MCF 10A (cell line): ENCODE measurements at regions of chr7 and their contacts with region 1.

Region 1: DNA sequence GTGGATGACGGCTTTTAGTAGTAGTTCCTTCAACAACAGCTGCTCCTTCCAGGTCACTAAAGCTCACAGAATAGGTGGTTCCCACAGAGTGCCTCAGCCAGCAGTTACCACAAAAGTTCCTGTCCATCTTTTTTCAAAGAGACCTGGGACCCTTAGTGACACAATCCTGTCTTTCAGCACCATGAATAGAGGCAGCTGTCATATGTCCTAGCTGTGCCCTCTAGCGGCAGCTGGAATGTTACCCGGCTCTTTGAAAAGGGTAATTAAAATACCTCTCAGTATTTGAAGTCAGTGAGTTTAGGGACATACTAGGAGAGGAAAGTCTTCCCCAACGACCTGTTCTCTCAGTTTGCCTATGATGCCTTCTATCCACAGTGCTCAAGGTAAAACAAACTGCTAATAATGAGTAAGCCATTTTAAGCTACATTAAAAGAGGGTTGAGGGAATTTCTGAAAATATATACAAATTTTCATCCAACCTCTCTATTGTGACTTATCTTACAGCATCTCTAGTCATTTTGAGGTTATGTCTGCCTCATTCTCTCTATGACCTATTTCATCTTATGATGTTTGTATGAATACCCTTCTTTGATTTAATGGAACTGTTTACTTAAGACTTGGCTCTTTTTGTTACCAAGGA is 290.8 kb downstream of the NXPH1 start:
- DNase-seq: peak; percentile 62
- H3K4me3 Mint-ChIP-seq: no peak overlapping the region
- H3K27ac Mint-ChIP-seq: no peak overlapping the region
- H3K4me1 Mint-ChIP-seq: no peaks in the 10 kb centered on the region
- H3K27me3 Mint-ChIP-seq: no peaks in the 10 kb centered on the region
- CTCF ChIP-seq: peak; percentile 68

Region 2: DNA sequence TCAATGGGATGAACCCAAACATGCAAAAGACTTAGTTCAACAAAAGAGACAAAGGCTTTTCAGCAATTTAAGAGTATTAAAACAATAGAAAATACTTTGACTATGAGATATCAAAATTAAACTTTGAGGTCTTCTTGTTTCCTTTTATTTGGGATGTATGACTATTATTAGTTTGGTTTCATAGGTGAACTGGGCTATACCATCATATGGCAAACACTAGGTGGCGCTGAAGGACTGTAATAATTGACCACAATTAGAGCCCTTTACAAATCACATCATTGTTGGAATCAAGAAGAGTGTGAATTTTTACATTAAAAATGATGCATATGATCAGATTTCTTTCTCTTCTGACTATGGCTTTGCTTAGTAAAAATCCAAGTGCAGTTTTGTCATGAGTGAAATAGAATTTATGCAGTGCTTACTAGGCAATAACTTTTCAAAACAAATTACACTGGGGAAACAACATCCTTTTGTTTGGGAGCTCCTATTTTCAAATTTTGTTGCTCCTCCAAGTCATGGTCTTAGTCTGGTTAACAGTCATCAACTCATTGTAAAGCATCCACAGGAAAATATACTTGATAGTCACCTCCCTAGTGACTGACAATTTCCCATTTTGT is 305.5 kb before region 1 on chr7:
- CTCF ChIA-PET with region 1: interaction called, 20 read pairs
- POLR2A ChIA-PET with region 1: no interaction called
- intact Hi-C with region 1: loop called (anchors 1 kb)
- DNase-seq: peak; percentile 75
- H3K4me3 Mint-ChIP-seq: no peak overlapping the region
- H3K27ac Mint-ChIP-seq: no peak overlapping the region
- H3K4me1 Mint-ChIP-seq: no peaks in the 10 kb centered on the region
- H3K27me3 Mint-ChIP-seq: peaks cover 36% of the 10 kb centered on the region
- CTCF ChIP-seq: peak; percentile 69

Region 3: DNA sequence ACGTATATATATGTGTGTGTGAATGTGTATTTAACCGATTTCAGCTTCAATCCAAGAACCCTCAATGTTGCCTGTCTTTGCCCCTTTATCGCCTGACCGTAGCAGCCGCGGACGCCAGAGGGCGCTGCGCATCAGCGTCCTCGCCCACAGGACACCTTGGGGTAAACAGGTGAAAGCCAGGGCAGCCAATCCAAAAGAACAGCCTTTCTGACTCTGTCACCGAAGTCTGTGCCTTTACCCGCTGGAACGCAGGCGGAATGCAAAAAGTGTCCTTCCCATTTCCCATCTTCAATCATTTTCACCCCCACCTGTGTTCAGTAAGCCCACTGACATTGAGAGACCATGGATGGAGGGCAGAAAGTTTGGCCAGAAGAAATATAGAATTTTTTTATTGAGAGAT is 287.2 kb before region 1 on chr7:
- CTCF ChIA-PET with region 1: interaction called, 5 read pairs
- POLR2A ChIA-PET with region 1: no interaction called
- intact Hi-C with region 1: loop called (anchors 1 kb)
- DNase-seq: peak; percentile 65
- H3K4me3 Mint-ChIP-seq: no peak overlapping the region
- H3K27ac Mint-ChIP-seq: no peak overlapping the region
- H3K4me1 Mint-ChIP-seq: peaks cover 5% of the 10 kb centered on the region
- H3K27me3 Mint-ChIP-seq: peaks cover 69% of the 10 kb centered on the region
- CTCF ChIP-seq: peak; percentile 67

Region 4: GRCh38 chr7:8668627-8669500 is 55.3 kb before region 1 on chr7:
- CTCF ChIA-PET with region 1: no interaction called
- POLR2A ChIA-PET with region 1: no interaction called
- intact Hi-C with region 1: no loop called
- DNase-seq: no peak
- H3K4me3 Mint-ChIP-seq: no peak overlapping the region
- H3K27ac Mint-ChIP-seq: no peak overlapping the region
- H3K4me1 Mint-ChIP-seq: no peaks in the 10 kb centered on the region
- H3K27me3 Mint-ChIP-seq: peaks cover 13% of the 10 kb centered on the region
- CTCF ChIP-seq: no peak

Region 5: DNA sequence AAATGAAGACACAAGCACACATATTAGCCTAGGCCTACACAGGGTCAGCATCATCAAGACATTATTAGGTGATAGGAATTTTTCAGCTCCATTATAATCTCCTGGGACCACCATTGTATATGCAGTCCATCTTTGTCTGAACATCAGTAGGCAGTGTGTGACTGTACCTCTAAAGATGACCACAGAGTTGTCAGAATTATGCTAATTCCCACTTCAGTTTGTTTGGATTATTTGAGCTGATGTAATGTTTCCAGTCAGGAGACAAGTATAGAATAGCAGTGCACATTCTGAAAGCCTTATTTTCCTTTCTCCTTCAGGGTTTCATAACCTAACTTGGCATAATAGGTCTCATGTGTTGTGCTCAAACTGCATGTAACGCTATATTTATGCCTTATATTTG is 15.6 kb after region 1 on chr7:
- CTCF ChIA-PET with region 1: interaction called, 12 read pairs
- POLR2A ChIA-PET with region 1: no interaction called
- intact Hi-C with region 1: no loop called
- DNase-seq: no peak
- H3K4me3 Mint-ChIP-seq: no peak overlapping the region
- H3K27ac Mint-ChIP-seq: no peak overlapping the region
- H3K4me1 Mint-ChIP-seq: no peaks in the 10 kb centered on the region
- H3K27me3 Mint-ChIP-seq: peaks cover 26% of the 10 kb centered on the region
- CTCF ChIP-seq: no peak